Lower leg skin (tissue), 4 donors: ENCODE measurements at regions of chr1 and their contacts with region 1.

Region 1: DNA sequence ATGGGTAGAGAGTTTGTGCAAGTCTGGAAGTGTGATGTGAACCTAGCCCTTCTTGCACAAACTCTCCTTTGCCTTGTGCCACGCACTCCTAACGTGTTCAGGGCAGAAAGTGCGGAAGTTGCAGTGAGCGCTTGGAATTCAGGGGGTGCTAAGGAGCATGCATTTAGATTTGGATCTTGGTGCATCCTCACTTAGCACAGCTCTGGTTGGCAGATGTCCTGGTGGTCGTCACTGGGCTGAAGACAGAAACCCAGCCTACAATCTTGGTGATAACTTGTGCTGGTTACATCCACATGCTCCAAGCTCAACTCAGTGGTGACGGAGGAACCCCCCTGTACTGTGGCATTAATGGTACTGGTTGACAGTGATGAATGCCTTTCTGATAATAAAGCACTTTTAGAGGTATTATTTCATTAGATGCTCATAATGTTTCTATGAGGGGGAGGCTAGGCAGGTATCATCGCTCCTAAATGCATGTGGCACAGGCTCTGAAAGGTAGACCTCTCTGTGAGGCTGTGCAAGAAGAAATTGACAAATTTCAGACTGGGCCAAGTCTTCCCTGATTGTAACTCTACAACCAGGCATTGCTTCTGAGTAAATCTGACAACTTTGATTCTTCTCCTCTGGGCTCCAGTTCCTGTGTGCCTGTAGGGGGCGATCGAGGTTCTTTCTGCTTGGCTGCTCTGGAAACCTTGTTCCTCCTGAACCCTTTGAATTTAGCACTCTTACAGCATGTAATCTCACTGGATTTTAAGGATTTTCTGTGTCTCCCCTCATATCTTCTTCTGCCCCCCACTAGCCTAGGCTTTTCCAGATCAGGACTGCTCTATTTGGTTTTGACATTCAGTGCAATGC is 40.6 kb downstream of the MAPKAPK2 start:
- DNase-seq: no peak
- H3K4me3 ChIP-seq: no peak overlapping the region
- CTCF ChIP-seq: no peak
- POLR2A ChIP-seq: no peak

Region 2: DNA sequence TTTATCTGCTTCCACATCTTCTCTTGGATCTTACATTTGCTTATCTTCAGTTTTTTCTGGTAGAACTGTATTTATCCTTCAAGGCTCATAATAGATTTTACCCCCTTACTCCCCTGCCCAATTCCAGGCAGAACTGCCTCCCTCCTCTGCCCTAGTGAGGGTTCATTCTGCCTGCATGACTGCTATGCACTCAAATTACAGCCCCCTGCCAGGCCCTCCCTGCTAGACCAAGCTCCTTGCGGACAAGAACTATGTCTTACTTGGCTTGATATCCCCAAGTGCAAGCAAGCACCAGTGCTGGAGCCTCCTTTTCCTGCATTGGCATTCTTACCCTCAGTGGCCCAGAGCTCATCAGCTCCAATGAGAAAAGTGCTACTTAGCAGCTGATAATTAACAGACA is 22.5 kb before region 1 on chr1:
- intact Hi-C with region 1: loop called (anchors 1 kb)
- DNase-seq: no peak
- H3K4me3 ChIP-seq: no peak overlapping the region
- CTCF ChIP-seq: no peak
- POLR2A ChIP-seq: no peak